Cardiac septum (tissue), 1 donor: ENCODE measurements at regions of chr1 and their contacts with region 1.

Region 1: GRCh38 chr1:33972676-33973395 is 109.0 kb downstream of the HMGB4 start:
- DNase-seq: no peak

Region 2: DNA sequence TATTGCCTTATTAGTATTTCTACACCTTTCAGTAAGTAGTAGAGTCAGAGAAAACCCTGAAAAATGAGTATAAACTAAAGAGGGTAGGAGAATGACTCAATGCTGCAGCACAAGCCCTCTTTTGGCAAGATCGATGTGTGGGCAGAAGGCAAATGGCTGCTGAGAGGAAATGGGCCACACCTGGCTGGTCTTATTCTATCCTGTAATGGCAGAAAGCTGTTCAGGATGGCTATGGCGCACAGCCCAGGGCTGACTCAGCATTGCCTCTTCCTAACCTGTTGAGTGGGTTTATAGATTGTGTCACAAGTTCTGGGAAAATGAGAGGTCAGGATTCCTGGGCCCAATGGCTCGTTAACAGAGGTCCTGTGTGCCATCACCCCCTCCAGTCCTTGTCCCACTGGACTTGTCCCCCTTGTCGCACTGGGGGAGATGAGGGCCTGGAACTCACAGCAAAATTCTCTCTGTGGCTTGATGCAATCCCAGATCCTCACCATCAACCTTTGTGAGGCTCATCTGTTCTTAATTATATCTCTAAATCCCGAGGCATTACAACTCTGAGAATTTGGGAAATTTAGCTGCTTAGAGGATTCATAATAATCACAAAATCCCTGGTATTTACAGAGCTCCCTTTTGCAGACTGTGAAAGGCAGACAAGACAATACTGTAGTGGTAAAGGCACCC is 95.7 kb before region 1 on chr1:
- intact Hi-C with region 1: no loop called
- DNase-seq: peak; percentile 78

Region 3: DNA sequence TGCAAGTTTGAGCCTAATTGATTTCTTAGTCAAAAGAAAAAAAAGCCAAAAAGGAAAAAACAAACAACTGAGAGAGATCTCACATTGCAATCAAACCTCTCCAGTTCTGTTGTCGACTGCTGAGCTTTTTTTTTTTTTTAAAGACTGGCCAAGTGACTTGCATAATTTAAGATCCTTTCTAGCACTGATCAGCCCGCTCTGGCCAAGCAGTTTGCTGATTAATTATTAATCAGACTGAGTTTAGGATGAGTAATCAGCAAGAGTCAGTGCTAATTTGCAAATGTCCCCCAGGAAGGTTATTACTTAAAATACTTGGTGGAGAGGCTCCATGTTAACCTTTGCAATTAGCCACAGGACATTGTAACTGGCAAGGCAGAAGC is 69.6 kb before region 1 on chr1:
- intact Hi-C with region 1: loop called (anchors 2 kb)
- DNase-seq: no peak

Region 4: GRCh38 chr1:34057347-34058130 is 84.7 kb after region 1 on chr1:
- intact Hi-C with region 1: loop called (anchors 5 kb)
- DNase-seq: peak; percentile 84